Esophagus muscularis mucosa (tissue), 4 donors: ENCODE measurements at regions of chr15 and their contacts with region 1.

Region 1: GRCh38 chr15:32723171-32723948 is 5.6 kb downstream of the GREM1 start:
- DNase-seq: no peak
- H3K4me3 ChIP-seq: no peak overlapping the region
- H3K27ac ChIP-seq: no peak overlapping the region
- H3K4me1 ChIP-seq: peaks cover 4 to 25% (median 17%) of the 10 kb centered on the region in 4 donors
- H3K27me3 ChIP-seq: peaks cover 0 to 18% (median 4%) of the 10 kb centered on the region in 4 donors
- CTCF ChIP-seq: no peak
- EP300 ChIP-seq: no peak
- POLR2A ChIP-seq: no peak

Region 2: DNA sequence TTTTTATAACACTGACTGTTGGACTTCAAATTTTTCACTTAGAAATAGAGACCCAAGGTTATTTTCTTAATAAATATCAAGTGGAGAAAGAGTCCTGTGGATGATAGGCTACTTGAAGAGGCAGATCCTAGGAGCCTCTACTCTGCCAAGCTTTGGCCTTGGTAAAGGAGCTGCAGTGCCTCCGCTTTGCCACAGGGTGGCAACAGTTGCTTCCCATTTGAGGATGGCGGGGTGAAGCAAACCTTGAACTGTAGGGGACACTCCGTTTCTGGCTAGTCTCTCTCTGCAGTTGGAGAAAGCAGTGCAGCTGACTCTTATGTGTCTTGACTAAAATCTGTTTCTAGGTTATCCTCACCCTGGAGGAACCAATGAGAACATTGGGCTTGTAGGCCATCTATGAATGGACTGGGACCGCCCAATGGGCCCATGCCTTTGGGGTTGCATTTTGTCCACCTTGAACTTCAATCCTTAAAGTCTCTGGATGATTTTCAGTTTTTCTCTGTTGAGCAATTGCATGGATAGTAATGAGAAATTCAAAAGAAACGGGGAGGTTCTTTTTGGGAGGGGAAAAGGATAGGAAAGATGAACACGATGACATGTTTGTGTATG is 72.0 kb before region 1 on chr15:
- intact Hi-C with region 1: no loop called
- DNase-seq: no peak
- H3K4me3 ChIP-seq: no peak overlapping the region
- H3K27ac ChIP-seq: no peak overlapping the region
- H3K4me1 ChIP-seq: peaks cover 0 to 23% (median 3%) of the 10 kb centered on the region in 4 donors
- H3K27me3 ChIP-seq: no peaks in the 10 kb centered on the region
- CTCF ChIP-seq: peak; percentile 76 to 94 (median 83)
- EP300 ChIP-seq: no peak
- POLR2A ChIP-seq: no peak

Region 3: GRCh38 chr15:32818758-32819447 is 95.5 kb after region 1 on chr15:
- intact Hi-C with region 1: loop called (anchors 10 kb)
- DNase-seq: no peak
- H3K4me3 ChIP-seq: no peak overlapping the region
- H3K27ac ChIP-seq: no peak overlapping the region
- H3K4me1 ChIP-seq: peaks cover 0 to 22% (median 16%) of the 10 kb centered on the region in 4 donors
- H3K27me3 ChIP-seq: no peaks in the 10 kb centered on the region
- CTCF ChIP-seq: no peak
- EP300 ChIP-seq: no peak
- POLR2A ChIP-seq: no peak

Region 4: GRCh38 chr15:32838820-32839219 is 115.5 kb after region 1 on chr15:
- intact Hi-C with region 1: no loop called
- DNase-seq: no peak
- H3K4me3 ChIP-seq: no peak overlapping the region
- H3K27ac ChIP-seq: no peak overlapping the region
- H3K4me1 ChIP-seq: peaks cover 0 to 10% (median 8%) of the 10 kb centered on the region in 4 donors
- H3K27me3 ChIP-seq: no peaks in the 10 kb centered on the region
- CTCF ChIP-seq: no peak
- EP300 ChIP-seq: no peak
- POLR2A ChIP-seq: no peak